ENCODE measurements at regions of chr18 and their contacts with region 1.

Region 1: GRCh38 chr18:59056706-59057492 is 82.8 kb upstream of the SEC11C start:
- DNase-seq: peak; percentile 64
- H3K4me3 ChIP-seq: no peak overlapping the region
- H3K27ac ChIP-seq: no peak overlapping the region
- H3K4me1 ChIP-seq: no peaks in the 10 kb centered on the region
- H3K27me3 ChIP-seq: no peaks in the 10 kb centered on the region
- CTCF ChIP-seq: peak; percentile 43 to 85 (median 50)
- POLR2A ChIP-seq: no peak

Region 2: DNA sequence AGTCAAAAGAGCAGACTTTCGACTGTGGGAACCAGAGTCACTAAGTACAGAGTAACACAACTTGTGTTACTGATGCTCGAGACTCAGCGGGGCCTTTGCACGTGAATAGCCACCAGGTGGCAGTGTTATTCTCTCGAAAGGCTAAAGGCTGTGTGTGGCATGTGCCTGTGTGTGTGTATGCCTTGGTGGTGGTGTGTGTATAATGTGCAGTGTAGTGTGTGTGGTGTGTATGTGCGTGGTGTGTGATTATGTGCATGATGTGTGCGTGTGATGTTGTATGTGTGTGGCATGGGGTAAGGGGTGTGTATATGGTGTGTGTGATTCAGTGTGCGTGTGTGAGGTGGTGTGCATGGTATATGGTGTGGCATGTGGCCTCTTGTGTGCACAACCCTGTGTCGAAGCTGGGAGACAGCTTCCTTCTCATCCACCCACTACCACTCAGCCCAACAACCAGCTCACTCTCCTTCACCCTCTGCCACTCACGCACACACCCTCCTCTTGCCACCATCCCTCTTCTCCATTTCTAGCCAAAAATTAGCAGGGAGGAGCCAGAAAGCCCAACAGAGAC is 275.2 kb before region 1 on chr18:
- intact Hi-C with region 1: loop called (anchors 5 kb)
- DNase-seq: peak; percentile 90
- H3K4me3 ChIP-seq: no peak overlapping the region
- H3K27ac ChIP-seq: no peak overlapping the region
- H3K4me1 ChIP-seq: no peaks in the 10 kb centered on the region
- H3K27me3 ChIP-seq: no peaks in the 10 kb centered on the region
- CTCF ChIP-seq: peak; percentile 83 to 93 (median 92)
- POLR2A ChIP-seq: no peak

Region 3: GRCh38 chr18:58847383-58848071 is 209.4 kb before region 1 on chr18:
- intact Hi-C with region 1: loop called (anchors 5 kb)
- DNase-seq: peak; percentile 67
- H3K4me3 ChIP-seq: peak overlapping the region; percentile 33 to 48
- H3K27ac ChIP-seq: peak overlapping the region; percentile 42 to 64
- H3K4me1 ChIP-seq: peaks cover 14% of the 10 kb centered on the region
- H3K27me3 ChIP-seq: no peaks in the 10 kb centered on the region
- CTCF ChIP-seq: no peak
- POLR2A ChIP-seq: no peak

Region 4: GRCh38 chr18:59540780-59541179 is 483.9 kb after region 1 on chr18:
- intact Hi-C with region 1: no loop called
- DNase-seq: no peak
- H3K4me3 ChIP-seq: no peak overlapping the region
- H3K27ac ChIP-seq: no peak overlapping the region
- H3K4me1 ChIP-seq: no peaks in the 10 kb centered on the region
- H3K27me3 ChIP-seq: no peaks in the 10 kb centered on the region
- CTCF ChIP-seq: no peak
- POLR2A ChIP-seq: no peak